Ascending aorta (tissue), 2 donors: ENCODE measurements at regions of chr7 and their contacts with region 1.

Region 1: DNA sequence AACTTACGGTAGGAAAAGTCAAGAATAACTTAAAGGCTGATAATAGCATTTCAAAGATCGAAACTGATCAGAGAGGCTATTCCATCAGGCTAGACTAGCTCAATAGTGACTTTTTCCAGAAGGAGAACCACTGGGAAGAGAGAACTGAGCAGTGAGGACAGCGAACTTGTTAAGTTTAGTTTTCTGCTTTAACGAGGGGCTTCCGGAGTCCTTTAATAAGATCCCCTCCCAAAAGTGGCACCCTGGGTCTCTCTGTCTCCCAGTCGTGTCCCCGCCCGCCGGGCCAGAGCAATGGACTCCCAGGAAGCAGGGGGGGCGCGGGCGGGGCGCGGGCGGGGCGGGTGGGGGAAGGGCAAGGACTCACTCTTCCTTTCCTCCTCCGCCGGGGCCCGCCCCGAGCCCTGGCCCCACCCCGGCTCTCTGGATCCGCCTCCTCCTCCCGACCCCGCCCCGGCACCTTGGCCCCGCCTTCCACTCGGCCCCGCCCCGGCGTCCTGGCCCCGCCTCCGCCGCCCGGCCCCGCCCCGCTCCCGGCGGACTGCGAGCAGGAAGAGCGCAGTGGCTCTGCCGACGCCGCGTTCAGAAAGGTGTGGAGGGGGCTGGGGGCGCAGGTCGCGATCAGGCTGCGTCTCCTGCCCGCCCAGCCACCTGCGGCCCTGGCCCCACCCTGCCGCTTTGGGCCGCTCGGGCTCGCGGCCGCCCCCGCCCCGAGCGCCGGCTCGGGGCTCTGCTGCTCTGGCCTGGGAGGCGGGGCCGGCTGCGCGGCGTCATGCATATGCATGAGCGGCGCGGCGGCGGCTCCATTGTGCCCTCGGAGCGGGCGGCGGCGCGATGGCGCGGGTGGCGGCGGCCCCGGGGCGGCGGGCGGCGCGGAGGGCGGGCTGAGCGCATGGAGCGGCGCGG is at the start of gene ZMIZ2:
- DNase-seq: peak; percentile 63 to 94
- H3K4me3 ChIP-seq: peak within 1 kb of the TSS; percentile 81 to 93
- H3K27ac ChIP-seq: peak within 1 kb of the TSS; percentile 88 to 98
- H3K4me1 ChIP-seq: peaks cover 4 to 15% of the 10 kb centered on the region in 2 donors
- H3K27me3 ChIP-seq: no peaks in the 10 kb centered on the region
- CTCF ChIP-seq: no peak
- total RNA-seq, gene ZMIZ2: 75.5 TPM

Region 2: DNA sequence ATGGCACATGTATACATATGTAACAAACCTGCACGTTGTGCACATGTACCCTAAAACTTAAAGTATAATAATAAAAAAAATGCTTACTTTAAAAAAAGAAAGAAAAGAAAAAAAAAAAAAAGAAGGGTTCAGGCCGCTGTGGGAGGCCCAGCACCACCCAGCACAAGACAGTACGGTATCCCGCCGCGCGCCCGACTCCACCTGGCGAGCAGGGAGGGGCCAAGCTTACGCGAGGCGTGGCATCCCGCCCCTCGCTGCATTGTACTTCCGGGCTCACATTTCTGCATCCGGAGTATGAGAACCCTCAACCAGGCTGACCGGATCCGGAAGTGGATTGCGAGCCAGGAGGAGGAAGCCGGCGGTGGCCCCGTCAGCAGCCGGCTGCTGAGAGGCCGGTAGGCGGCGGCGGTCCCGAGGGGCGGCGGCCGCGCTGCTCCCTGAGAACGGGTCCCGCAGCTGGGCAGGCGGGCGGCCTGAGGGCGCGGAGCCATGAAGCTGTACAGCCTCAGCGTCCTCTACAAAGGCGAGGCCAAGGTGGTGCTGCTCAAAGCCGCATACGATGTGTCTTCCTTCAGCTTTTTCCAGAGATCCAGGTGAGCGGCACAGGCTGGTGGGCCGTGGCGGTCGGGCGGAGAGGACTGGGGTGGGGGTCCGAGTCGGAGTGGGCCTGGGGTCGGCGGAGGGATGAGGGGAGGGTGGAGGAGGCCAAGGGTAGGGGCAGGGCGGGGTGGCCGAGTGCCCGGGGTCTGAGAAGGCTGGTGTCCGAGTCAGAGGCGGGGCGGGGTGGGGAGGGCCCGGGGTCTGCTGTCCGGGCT is 547.4 kb before region 1 on chr7 and contains the start of gene YKT6:
- intact Hi-C with region 1: no loop called
- DNase-seq: peak; percentile 77 to 97
- H3K4me3 ChIP-seq: peak within 1 kb of the TSS; percentile 67 to 88
- H3K27ac ChIP-seq: peak within 1 kb of the TSS; percentile 73 to 74
- H3K4me1 ChIP-seq: no peaks in the 10 kb centered on the region
- H3K27me3 ChIP-seq: no peaks in the 10 kb centered on the region
- CTCF ChIP-seq: peak; percentile 45 to 81 (median 73)
- total RNA-seq, gene YKT6: 40.1 TPM

Region 3: GRCh38 chr7:44257618-44258422 is 490.5 kb before region 1 on chr7:
- intact Hi-C with region 1: loop called (anchors 5 kb)
- DNase-seq: peak; percentile 84 to 96
- H3K4me3 ChIP-seq: peak overlapping the region; percentile 10 to 22
- H3K27ac ChIP-seq: peak overlapping the region; percentile 99 to 100
- H3K4me1 ChIP-seq: peaks cover 28 to 34% of the 10 kb centered on the region in 2 donors
- H3K27me3 ChIP-seq: no peaks in the 10 kb centered on the region
- CTCF ChIP-seq: no peak

Region 4: GRCh38 chr7:44581879-44582603 is 166.3 kb before region 1 on chr7 and contains the start of gene TMED4:
- intact Hi-C with region 1: loop called (anchors 1 kb)
- DNase-seq: peak; percentile 98 to 100
- H3K4me3 ChIP-seq: peak within 1 kb of the TSS; percentile 92 to 96
- H3K27ac ChIP-seq: peak within 1 kb of the TSS; percentile 88 to 97
- H3K4me1 ChIP-seq: peaks cover 6 to 17% of the 10 kb centered on the region in 2 donors
- H3K27me3 ChIP-seq: no peaks in the 10 kb centered on the region
- CTCF ChIP-seq: no peak
- total RNA-seq, gene TMED4: 69.1 TPM

Region 5: DNA sequence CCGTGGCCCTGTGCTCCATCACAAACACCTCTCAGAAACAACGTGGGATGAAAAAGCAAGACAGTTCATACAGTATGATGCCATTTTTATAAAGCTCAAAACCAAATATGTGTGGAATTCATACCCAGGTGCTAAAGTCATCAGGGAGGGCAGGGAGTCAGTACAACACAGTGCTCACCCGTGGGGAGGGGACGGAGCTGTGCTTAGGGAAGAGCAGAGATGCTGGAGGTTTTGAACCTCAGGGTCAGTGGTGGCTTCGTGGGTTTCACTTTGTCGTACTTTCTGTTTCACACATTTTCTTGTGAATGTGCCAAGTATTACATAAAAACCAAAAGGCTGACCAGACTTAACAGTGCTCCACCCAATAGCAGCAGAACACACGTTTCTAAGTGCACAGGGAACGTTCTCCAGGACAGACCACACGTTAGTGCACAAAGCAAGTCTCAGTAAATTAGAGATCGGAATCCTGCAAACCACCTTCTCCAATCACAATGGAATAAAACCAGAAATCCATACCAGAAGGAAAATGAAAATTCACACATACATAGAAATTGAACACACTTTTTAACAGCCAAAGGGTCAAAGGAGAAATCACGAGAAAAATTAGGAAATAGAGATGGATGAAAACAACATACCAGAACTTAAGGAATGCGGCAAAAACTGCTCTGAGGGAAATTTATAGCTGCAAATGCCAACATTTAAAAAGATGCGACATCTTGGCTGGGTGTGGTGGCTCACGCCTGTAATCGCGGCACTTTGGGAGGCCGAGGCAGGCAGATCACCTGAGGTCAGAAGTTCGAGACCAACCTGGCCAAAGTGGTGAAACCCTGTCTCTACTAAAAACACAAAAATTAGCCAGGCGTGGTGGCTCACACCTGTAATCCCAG is 21.7 kb after region 1 on chr7:
- intact Hi-C with region 1: loop called (anchors 2 kb)
- DNase-seq: no peak
- H3K4me3 ChIP-seq: peak overlapping the region; percentile 26 to 50
- H3K27ac ChIP-seq: peak overlapping the region; percentile 52 to 67
- H3K4me1 ChIP-seq: peaks cover 10 to 25% of the 10 kb centered on the region in 2 donors
- H3K27me3 ChIP-seq: no peaks in the 10 kb centered on the region
- CTCF ChIP-seq: no peak

Region 6: DNA sequence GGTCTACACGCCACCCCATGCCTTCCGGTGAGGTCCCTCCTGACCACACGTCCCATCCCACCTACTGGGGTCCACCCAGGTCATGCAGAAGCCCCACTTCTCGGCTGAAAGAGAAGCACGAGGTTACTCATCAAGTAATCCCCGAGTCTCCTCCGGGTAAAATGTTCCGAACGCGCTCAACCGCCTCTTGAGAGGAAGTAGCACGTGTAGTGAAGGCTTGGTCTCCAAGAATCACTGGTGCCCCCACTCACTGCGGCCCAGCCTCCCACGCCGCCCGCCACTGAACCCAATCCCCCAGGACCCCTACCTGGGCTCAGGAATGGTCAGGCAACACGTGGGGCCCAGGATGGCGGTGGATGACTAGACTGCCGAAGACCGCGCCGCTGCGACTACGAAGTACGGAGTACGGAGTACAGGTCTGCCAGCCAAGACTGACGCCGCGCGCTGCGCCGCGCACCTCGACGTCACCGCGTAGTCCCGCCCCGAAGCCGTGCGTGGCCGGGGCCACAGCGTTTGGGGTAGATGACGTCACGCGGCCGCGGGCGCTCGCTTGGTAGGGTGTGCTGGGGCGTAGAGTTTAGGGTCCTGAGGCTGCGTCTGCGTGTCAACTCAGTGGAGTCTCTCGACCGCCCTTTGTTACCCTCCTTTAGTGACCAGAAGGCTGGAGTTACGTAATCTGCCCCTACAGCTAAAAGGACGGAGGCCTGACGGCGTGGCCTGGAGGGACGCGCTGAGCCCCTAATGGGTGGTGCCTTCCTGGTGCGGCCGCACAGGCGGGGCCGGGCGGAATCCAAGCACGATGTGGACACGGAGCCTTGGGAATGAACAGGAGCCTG is 238.1 kb after region 1 on chr7:
- intact Hi-C with region 1: loop called (anchors 1 kb)
- DNase-seq: peak; percentile 58 to 96
- H3K4me3 ChIP-seq: peak overlapping the region; percentile 68
- H3K27ac ChIP-seq: peak overlapping the region; percentile 89 to 90
- H3K4me1 ChIP-seq: peaks cover 6 to 12% of the 10 kb centered on the region in 2 donors
- H3K27me3 ChIP-seq: no peaks in the 10 kb centered on the region
- CTCF ChIP-seq: no peak